Mammary epithelial cell (primary cell): ENCODE measurements at regions of chr11 and their contacts with region 1.

Region 1: DNA sequence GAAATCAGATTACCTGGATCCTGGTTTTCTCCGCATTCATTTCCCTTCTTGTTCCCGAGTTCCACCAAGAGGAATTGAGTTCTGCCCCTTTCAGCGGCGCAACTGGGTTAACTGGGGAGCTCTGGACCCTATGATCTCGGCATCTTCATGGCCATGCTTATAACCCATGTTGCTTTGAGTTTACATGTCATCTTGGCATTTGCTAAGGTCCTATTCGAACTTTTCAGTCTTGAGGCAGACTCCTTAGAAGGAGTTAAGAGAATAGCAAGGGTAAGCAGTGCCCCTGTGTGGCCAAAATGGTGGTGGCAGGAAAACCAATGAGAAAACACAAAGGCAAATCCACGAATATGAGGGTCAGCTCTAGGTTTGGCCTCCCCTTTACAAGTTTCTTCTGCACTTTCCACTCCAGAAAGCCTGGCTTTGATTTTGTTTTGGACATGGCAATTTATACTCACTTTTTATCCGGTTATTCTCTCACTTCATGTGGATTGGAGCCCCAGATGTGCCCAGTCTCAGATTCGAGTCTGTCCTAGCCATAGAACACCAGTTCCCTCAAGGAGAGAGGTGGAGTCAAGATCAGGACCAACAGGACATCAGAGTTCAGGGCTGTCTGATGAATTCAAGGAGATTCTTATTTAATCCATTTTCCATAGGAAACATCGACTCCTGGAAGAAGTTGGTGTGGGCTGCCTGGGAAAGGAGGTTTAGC is 55.3 kb upstream of the FBXO3 start:
- DNase-seq: peak; percentile 66
- H3K4me3 ChIP-seq: peak overlapping the region; percentile 41 to 52 (median 52)
- H3K27ac ChIP-seq: no peak overlapping the region
- H3K4me1 ChIP-seq: peaks cover 26% of the 10 kb centered on the region
- H3K27me3 ChIP-seq: no peaks in the 10 kb centered on the region
- CTCF ChIP-seq: peak; percentile 93 to 95

Region 2: GRCh38 chr11:33168709-33169200 is 660.8 kb before region 1 on chr11:
- CTCF ChIA-PET with region 1: no interaction called
- dilution Hi-C with region 1: no loop called
- in situ Hi-C with region 1: no loop called
- intact Hi-C with region 1: loop called (anchors 5 kb)
- DNase-seq: no peak
- H3K4me3 ChIP-seq: no peak overlapping the region
- H3K27ac ChIP-seq: no peak overlapping the region
- H3K4me1 ChIP-seq: no peaks in the 10 kb centered on the region
- H3K27me3 ChIP-seq: no peaks in the 10 kb centered on the region
- CTCF ChIP-seq: no peak

Region 3: DNA sequence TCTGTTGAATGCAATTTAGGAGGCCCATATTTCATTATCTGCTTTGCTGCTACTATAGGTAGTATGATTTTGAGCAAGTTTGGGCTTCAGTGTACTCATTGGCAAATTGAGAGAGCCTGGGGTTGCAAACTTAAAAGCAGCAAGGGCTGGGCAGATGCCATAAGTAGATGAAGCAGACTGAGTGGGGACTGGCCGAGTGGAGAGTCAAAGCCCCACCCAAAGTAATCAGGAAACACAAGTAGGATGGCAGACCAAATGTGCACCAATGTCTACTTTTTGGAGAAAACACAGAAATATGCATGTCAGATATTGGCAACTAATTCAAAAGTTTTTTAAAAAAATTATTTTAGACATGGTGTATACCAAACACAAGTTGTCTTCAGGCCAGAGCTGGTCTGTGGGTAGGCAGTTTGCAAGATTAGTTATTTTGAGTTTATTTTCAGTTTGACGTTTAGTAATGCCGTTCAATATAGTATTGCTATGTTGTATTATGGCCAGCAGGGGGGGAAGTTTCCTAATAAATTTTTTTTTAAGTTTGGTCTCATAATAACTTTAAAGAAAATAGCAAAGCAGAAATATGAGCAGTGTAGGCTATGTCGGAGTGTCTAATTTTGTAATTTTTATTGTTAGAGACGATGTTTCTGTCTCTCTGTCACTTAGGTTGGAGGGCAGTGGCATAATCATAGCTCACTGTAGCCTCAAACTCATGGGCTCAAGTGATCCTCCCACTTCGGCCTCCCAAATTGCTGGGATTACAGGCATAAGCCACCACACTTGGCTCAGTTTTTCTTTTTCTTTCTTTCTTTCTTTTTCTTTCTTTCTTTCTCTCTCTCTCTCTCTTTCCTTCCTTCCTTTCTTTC is 467.3 kb before region 1 on chr11:
- CTCF ChIA-PET with region 1: no interaction called
- dilution Hi-C with region 1: no loop called
- in situ Hi-C with region 1: no loop called
- intact Hi-C with region 1: loop called (anchors 1 kb)
- DNase-seq: peak; percentile 42
- H3K4me3 ChIP-seq: no peak overlapping the region
- H3K27ac ChIP-seq: no peak overlapping the region
- H3K4me1 ChIP-seq: no peaks in the 10 kb centered on the region
- H3K27me3 ChIP-seq: no peaks in the 10 kb centered on the region
- CTCF ChIP-seq: peak; percentile 46 to 49

Region 4: DNA sequence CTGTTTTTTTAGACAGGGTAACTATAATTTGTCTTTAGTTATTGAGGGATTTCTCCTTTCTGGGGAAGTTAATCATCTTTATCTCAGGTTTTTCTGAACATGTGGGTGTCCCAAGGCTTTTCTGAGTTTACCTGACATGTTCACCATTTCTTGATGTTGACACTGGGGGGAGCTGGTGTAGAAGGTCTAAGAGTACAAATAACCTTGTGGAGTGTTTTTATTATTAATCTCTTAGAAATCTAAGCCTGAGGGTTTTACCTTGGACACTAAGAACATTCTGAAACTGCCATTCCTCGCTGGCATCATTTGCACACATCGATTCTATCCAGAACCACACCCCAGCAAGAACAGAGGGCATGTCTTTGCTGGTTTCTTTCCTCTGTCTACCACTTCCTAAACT is 113.4 kb before region 1 on chr11:
- CTCF ChIA-PET with region 1: no interaction called
- dilution Hi-C with region 1: no loop called
- in situ Hi-C with region 1: no loop called
- intact Hi-C with region 1: loop called (anchors 1 kb)
- DNase-seq: peak; percentile 80
- H3K4me3 ChIP-seq: no peak overlapping the region
- H3K27ac ChIP-seq: peak overlapping the region; percentile 93
- H3K4me1 ChIP-seq: peaks cover 59% of the 10 kb centered on the region
- H3K27me3 ChIP-seq: no peaks in the 10 kb centered on the region
- CTCF ChIP-seq: peak; percentile 44 to 58

Region 5: GRCh38 chr11:33773987-33774735 is 55.4 kb before region 1 on chr11 and contains the start of gene FBXO3:
- CTCF ChIA-PET with region 1: no interaction called
- dilution Hi-C with region 1: no loop called
- in situ Hi-C with region 1: no loop called
- intact Hi-C with region 1: loop called (anchors 2 kb)
- DNase-seq: peak; percentile 78
- H3K4me3 ChIP-seq: peak within 1 kb of the TSS; percentile 86 to 93 (median 88)
- H3K27ac ChIP-seq: peak within 1 kb of the TSS; percentile 76
- H3K4me1 ChIP-seq: peaks cover 39% of the 10 kb centered on the region
- H3K27me3 ChIP-seq: no peaks in the 10 kb centered on the region
- CTCF ChIP-seq: no peak
- total RNA-seq, gene FBXO3: 27.6 to 44.8 TPM

Region 6: GRCh38 chr11:33808228-33808828 is 21.3 kb before region 1 on chr11:
- CTCF ChIA-PET with region 1: no interaction called
- dilution Hi-C with region 1: no loop called
- in situ Hi-C with region 1: no loop called
- intact Hi-C with region 1: loop called (anchors 1 kb)
- DNase-seq: peak; percentile 58
- H3K4me3 ChIP-seq: no peak overlapping the region
- H3K27ac ChIP-seq: no peak overlapping the region
- H3K4me1 ChIP-seq: no peaks in the 10 kb centered on the region
- H3K27me3 ChIP-seq: no peaks in the 10 kb centered on the region
- CTCF ChIP-seq: peak; percentile 92 to 93